ENCODE measurements at regions of chr14 and their contacts with region 1.

Region 1: GRCh38 chr14:56339855-56340701 is 221.9 kb downstream of the PELI2 start:
- DNase-seq: peak; percentile 94
- H3K4me3 ChIP-seq: no peak overlapping the region
- H3K27ac ChIP-seq: peak overlapping the region; percentile 76
- H3K27me3 ChIP-seq: no peaks in the 10 kb centered on the region
- CTCF ChIP-seq: peak; percentile 98

Region 2: GRCh38 chr14:55731881-55732498 is 608.1 kb before region 1 on chr14:
- CTCF ChIA-PET with region 1: interaction called, 19 read pairs
- POLR2A ChIA-PET with region 1: interaction called, 3 read pairs
- DNase-seq: no peak
- H3K4me3 ChIP-seq: no peak overlapping the region
- H3K27ac ChIP-seq: no peak overlapping the region
- H3K27me3 ChIP-seq: no peaks in the 10 kb centered on the region
- CTCF ChIP-seq: peak; percentile 66

Region 3: DNA sequence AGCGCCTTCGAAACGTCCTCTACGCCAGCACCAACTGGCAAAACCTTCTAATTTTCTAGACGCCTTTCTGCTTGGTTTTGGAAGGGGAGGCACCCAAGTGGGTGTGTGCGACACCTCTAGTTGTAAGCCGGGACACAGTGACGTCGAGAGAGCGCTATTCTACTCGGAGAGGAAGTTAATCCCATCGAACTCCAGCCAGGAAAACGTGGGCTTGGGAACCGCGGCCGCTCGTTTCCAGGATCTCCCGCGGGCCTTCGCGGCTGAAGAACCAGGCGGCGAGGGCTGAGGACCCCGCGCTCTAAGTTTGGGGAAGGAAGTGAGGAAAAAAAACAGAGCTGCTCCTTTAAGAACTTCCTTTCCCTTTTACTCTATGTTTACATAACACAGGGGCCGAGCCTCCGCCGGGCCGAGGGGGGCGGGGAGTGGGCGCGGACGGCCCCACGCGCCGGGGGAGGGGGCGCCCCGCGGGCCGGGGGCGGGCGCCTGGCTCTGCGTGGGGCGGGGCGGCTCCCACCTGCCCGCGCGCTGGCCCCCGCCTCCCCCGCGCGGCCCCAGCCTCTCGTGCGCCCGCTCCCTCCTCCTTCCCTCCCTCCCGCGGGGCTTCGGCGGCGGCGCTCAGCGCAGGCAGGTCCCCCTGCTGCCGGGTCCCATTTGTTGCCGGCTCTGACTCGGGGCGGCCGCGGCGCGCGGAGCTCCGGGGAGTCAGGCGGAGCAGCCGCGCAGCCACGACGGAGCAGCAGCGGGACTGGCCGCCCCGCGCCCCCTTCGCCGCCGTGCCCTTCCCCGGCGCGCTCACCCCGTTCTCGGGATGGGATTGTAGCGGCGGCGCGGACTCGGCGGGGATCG is 222.1 kb before region 1 on chr14 and contains the start of gene PELI2:
- CTCF ChIA-PET with region 1: interaction called, 15 read pairs
- POLR2A ChIA-PET with region 1: interaction called, 12 read pairs
- DNase-seq: peak; percentile 54
- H3K4me3 ChIP-seq: peak within 1 kb of the TSS; percentile 75
- H3K27ac ChIP-seq: peak within 1 kb of the TSS; percentile 77
- H3K27me3 ChIP-seq: no peaks in the 10 kb centered on the region
- CTCF ChIP-seq: no peak; the same call in 1 of the 2 replicates
- polyA plus RNA-seq, gene PELI2: 25.7 and 27.2 TPM in 2 replicates

Region 4: DNA sequence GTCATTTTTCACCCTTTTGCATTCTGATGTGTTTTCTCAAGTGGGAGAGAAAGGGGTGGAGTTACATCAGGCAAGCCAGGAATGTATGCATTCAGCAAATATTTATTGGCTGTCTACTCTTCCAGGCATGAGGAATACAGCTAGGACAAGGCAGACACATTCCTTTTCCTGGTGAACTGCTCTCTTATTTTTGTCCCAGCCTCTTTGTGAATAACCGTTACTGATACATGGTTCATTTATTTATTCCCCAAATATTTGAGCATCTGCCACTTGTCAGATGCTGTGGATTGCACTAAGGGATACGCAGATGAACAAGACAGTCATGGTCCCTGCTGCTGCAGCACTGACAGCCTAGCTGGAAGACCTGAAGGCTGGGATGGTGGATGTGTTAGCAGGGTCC is 215.8 kb before region 1 on chr14:
- CTCF ChIA-PET with region 1: interaction called, 15 read pairs
- POLR2A ChIA-PET with region 1: interaction called, 6 read pairs
- DNase-seq: no peak
- H3K4me3 ChIP-seq: no peak overlapping the region
- H3K27ac ChIP-seq: no peak overlapping the region
- H3K27me3 ChIP-seq: no peaks in the 10 kb centered on the region
- CTCF ChIP-seq: no peak

Region 5: DNA sequence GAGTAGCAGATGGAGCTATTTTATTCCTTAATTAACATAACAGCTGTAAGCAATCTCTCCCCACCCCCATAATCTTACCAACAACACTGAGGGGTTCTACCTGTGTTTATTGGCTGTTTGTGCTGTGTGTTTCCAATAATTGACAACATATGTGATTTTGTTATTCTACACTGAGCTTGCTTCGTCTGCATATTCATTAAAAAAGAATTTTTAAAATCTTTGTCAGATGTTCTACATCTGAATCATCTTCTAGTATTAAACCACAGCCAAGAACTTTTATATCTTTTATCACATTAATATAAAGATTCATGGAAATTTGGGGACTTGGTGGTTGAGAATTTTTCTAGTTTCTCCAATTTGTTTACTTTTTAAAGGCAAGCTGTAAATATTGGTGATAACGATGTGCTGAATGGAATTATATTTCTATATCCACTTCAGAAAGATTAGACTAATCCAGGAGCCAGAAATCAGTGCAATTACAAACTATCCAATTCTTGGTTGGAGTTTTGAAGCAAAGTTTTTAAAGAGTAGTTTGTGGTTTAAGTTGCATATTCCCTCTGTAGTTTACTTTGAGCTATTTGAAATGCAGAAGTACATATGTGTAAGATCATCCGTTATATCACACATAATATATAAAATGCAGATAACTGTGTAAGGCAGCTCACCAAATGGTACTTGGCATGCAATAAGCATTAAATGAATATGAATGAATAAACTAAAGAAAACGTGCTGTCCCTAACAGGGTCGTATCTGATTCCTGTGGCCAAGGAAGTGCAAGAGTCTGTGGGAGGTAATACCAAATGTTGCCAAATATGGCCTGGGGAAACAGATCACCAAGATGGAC is 15.0 kb before region 1 on chr14:
- CTCF ChIA-PET with region 1: interaction called, 27 read pairs
- POLR2A ChIA-PET with region 1: interaction called, 4 read pairs
- DNase-seq: no peak
- H3K4me3 ChIP-seq: no peak overlapping the region
- H3K27ac ChIP-seq: peak overlapping the region; percentile 66
- H3K27me3 ChIP-seq: no peaks in the 10 kb centered on the region
- CTCF ChIP-seq: no peak

Region 6: DNA sequence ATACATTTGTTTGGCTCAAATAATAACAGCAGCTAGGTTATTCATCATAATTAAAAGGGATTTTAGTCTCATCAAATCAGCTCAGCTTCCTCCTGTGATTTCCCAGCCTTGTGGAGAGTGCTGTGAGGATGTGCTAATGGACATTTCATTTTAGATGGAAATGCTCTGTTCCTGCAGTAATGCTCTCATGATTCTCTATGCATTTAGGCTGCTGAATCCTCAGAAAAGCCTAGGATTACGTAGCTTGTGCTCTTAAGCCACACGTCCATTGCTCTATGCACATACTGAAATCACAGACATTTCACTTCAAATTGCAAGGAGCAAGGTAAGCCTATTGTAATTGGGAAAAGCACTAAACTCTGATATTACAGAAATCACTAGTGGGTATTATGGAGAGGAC is 12.9 kb after region 1 on chr14:
- CTCF ChIA-PET with region 1: interaction called, 20 read pairs
- POLR2A ChIA-PET with region 1: interaction called, 4 read pairs
- DNase-seq: no peak
- H3K4me3 ChIP-seq: no peak overlapping the region
- H3K27ac ChIP-seq: no peak overlapping the region
- H3K27me3 ChIP-seq: no peaks in the 10 kb centered on the region
- CTCF ChIP-seq: no peak

Measured in AG04450 (cell line).